Breast epithelium (tissue), 4 donors: ENCODE measurements at regions of chr16 and their contacts with region 1.

Region 1: DNA sequence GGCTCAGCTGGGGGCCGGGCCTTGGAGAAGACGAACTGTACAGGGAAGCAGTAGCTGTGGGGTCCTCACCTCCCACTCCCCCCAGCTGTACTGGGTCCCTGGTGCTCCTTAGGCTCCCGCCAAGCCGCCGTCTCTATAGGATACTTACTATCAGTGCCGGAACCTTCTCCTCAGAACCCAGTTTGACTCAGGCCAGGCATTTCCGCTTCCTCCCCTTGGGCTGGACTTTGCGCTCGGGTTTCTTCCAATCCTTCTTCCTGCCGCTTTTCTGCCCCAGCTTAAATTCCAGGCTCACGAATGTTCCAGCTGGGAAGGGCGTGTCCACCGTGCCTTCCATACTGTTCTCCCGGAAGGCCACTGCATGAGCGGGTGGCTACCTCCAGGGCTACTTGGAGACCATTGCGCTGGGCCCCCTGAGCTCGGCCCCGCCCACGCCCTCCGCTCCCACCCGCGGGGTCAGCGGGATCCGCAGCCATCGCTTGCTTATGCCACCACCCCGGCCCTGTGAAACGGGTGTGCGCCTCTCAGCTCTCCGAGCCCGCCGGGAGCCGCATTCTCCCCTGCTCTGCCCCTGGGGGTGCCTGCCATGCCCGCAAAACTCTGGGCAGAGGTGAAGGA is 1795.9 kb downstream of the TP53TG3F start:
- DNase-seq: no peak
- H3K4me3 ChIP-seq: no peak overlapping the region
- H3K27ac ChIP-seq: no peak overlapping the region
- H3K4me1 ChIP-seq: no peaks in the 10 kb centered on the region
- H3K27me3 ChIP-seq: no peaks in the 10 kb centered on the region
- CTCF ChIP-seq: no peak
- POLR2A ChIP-seq: no peak

Region 2: GRCh38 chr16:35140293-35140986 is 114.9 kb before region 1 on chr16:
- intact Hi-C with region 1: no loop called
- DNase-seq: no peak
- H3K4me3 ChIP-seq: no peak overlapping the region
- H3K27ac ChIP-seq: no peak overlapping the region
- H3K4me1 ChIP-seq: no peaks in the 10 kb centered on the region
- H3K27me3 ChIP-seq: no peaks in the 10 kb centered on the region
- CTCF ChIP-seq: no peak
- POLR2A ChIP-seq: no peak

Region 3: DNA sequence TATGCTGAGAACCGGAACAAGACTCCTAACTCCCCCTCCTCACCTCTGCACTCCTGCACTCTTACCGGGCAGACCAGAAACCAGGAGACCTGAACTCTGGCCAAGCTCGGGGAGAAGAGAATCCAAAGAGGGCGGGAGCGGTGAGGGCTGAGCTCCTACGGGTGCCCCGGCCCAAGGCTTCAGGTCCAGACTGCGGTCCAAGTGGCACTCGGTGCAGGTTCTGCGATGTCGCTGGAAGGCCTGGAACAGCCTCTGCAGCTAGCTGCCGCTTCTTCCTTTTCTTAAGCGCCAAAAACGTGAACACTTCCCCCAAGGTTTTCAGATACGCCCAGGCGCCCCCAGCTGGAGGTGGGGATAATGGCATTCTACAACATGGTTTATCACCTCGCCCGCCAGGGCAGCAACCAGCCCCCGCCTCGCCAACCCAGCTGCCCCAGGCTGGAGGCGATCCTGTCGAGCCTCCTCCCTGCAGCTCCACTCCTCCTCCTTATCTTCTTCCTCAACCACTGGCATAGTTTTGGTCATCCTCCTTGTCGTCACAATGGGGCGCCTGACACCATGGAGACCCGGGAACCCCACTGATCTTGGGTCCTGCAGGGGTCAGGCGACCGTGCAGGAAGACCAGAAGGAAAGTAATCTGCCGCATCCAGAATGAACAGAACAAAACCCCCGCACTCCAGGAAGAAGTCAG is 60.0 kb before region 1 on chr16:
- intact Hi-C with region 1: loop called (anchors 10 kb)
- DNase-seq: no peak
- H3K4me3 ChIP-seq: no peak overlapping the region
- H3K27ac ChIP-seq: no peak overlapping the region
- H3K4me1 ChIP-seq: no peaks in the 10 kb centered on the region
- H3K27me3 ChIP-seq: no peaks in the 10 kb centered on the region
- CTCF ChIP-seq: no peak
- POLR2A ChIP-seq: no peak

Region 4: DNA sequence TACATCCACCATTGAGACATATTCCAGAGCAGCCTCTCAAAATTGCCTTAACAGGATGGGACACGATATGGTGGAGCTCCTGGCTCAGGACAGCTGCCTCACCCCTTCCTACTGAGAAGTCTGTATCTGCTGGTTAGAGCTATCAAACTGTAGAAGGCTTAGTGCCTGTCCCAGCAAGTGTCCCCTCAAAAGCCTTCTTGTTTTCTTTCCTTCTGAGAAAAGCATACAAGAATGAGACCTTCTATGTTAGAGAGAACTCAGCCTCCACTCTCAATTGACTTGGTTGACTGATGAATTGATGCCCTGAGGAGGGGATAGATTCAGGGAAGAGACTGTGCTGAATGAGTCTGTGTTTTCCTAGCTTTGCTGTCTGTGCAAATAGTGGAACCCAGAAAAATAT is 225.1 kb after region 1 on chr16:
- intact Hi-C with region 1: no loop called
- DNase-seq: no peak
- H3K4me3 ChIP-seq: no peak overlapping the region
- H3K27ac ChIP-seq: no peak overlapping the region
- H3K4me1 ChIP-seq: no peaks in the 10 kb centered on the region
- H3K27me3 ChIP-seq: no peaks in the 10 kb centered on the region
- CTCF ChIP-seq: no peak
- POLR2A ChIP-seq: no peak